Gastrocnemius medialis (tissue), 4 donors: ENCODE measurements at regions of chr17 and their contacts with region 1.

Region 1: GRCh38 chr17:76726231-76726775 is at the start of gene JMJD6:
- DNase-seq: peak; percentile 98
- ATAC-seq: peak; percentile 86 to 88
- H3K4me3 ChIP-seq: peak within 1 kb of the TSS; percentile 83 to 99 (median 97)
- H3K27ac ChIP-seq: peak within 1 kb of the TSS; percentile 98 to 100 (median 100)
- H3K4me1 ChIP-seq: peaks cover 31 to 36% of the 10 kb centered on the region in 2 donors
- H3K27me3 ChIP-seq: no peaks in the 10 kb centered on the region
- CTCF ChIP-seq: no peak
- POLR2A ChIP-seq: peak; percentile 86 to 97
- total RNA-seq, gene JMJD6: 29.7 to 42.9 (median 41.7) TPM

Region 2: GRCh38 chr17:76737082-76737675 is 10.9 kb after region 1 on chr17 and contains the start of gene SRSF2:
- in situ Hi-C with region 1: no loop called
- intact Hi-C with region 1: loop called (anchors 1 kb)
- DNase-seq: peak; percentile 97 to 98
- ATAC-seq: peak; percentile 74 to 76
- H3K4me3 ChIP-seq: peak within 1 kb of the TSS; percentile 82 to 99 (median 93)
- H3K27ac ChIP-seq: peak within 1 kb of the TSS; percentile 96 to 99 (median 99)
- H3K4me1 ChIP-seq: peaks cover 63 to 76% of the 10 kb centered on the region in 2 donors
- H3K27me3 ChIP-seq: no peaks in the 10 kb centered on the region
- CTCF ChIP-seq: no peak
- POLR2A ChIP-seq: peak; percentile 99 to 100
- total RNA-seq, gene SRSF2: 75.0 to 148 (median 90.4) TPM